SK-N-SH (cell line): ENCODE measurements at regions of chr1 and their contacts with region 1.

Region 1: DNA sequence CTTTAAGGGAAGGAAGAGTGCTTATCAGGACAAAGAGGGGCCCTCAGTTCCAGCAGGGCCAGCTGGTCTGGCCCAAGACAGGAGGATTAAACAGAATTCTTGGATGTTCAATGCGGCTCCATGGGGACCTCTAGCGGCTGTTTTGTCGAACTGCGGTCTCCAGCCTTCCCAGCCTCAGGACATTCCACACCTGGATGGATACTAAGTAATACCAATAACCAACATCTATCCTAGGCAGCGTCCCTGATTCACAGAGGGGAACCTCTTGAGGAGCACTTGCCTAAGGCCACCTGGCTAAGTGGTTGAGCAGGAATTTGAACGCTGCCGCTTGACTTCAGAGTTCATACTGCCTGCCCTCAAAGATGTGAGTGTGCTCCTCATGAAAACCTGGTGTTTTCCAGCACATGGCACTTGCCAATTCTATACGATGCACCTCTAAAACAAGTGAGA is 15.5 kb upstream of the CD247 start:
- DNase-seq: peak; percentile 81
- H3K4me3 ChIP-seq: no peak overlapping the region; a peak in 1 of 4 replicates
- H3K27ac ChIP-seq: no peak overlapping the region
- H3K4me1 ChIP-seq: peaks cover 0 to 3% of the 10 kb centered on the region in 2 experiments; a peak in 1 of 4 replicates
- H3K27me3 ChIP-seq: no peaks in the 10 kb centered on the region; the same call in 1 of the 2 replicates
- CTCF ChIP-seq: peak; percentile 91
- EP300 ChIP-seq: no peak
- RAD21 ChIP-seq: peak; percentile 91

Region 2: GRCh38 chr1:166910396-166910994 is 623.4 kb before region 1 on chr1:
- CTCF ChIA-PET with region 1: interaction called, 11 read pairs
- POLR2A ChIA-PET with region 1: no interaction called
- DNase-seq: peak; percentile 71
- H3K4me3 ChIP-seq: no peak overlapping the region; a peak in 1 of 4 replicates
- H3K27ac ChIP-seq: no peak overlapping the region
- H3K4me1 ChIP-seq: no peaks in the 10 kb centered on the region
- H3K27me3 ChIP-seq: no peaks in the 10 kb centered on the region
- CTCF ChIP-seq: peak; percentile 79
- EP300 ChIP-seq: no peak
- RAD21 ChIP-seq: peak; percentile 91

Region 3: GRCh38 chr1:167066333-167067122 is 467.3 kb before region 1 on chr1:
- CTCF ChIA-PET with region 1: interaction called, 32 read pairs
- POLR2A ChIA-PET with region 1: no interaction called
- DNase-seq: peak; percentile 91
- H3K4me3 ChIP-seq: peak overlapping the region; percentile 30 to 47; a peak in 3 of 4 replicates
- H3K27ac ChIP-seq: no peak overlapping the region
- H3K4me1 ChIP-seq: no peaks in the 10 kb centered on the region; a peak in 2 of 4 replicates
- H3K27me3 ChIP-seq: no peaks in the 10 kb centered on the region; the same call in 1 of the 2 replicates
- CTCF ChIP-seq: peak; percentile 94
- EP300 ChIP-seq: no peak
- RAD21 ChIP-seq: peak; percentile 96

Region 4: GRCh38 chr1:167401260-167401873 is 132.5 kb before region 1 on chr1:
- CTCF ChIA-PET with region 1: interaction called, 35 read pairs
- POLR2A ChIA-PET with region 1: no interaction called
- DNase-seq: peak; percentile 48
- H3K4me3 ChIP-seq: no peak overlapping the region
- H3K27ac ChIP-seq: no peak overlapping the region
- H3K4me1 ChIP-seq: no peaks in the 10 kb centered on the region; a peak in 2 of 4 replicates
- H3K27me3 ChIP-seq: no peaks in the 10 kb centered on the region
- CTCF ChIP-seq: peak; percentile 65
- EP300 ChIP-seq: no peak
- RAD21 ChIP-seq: peak; percentile 79

Region 5: DNA sequence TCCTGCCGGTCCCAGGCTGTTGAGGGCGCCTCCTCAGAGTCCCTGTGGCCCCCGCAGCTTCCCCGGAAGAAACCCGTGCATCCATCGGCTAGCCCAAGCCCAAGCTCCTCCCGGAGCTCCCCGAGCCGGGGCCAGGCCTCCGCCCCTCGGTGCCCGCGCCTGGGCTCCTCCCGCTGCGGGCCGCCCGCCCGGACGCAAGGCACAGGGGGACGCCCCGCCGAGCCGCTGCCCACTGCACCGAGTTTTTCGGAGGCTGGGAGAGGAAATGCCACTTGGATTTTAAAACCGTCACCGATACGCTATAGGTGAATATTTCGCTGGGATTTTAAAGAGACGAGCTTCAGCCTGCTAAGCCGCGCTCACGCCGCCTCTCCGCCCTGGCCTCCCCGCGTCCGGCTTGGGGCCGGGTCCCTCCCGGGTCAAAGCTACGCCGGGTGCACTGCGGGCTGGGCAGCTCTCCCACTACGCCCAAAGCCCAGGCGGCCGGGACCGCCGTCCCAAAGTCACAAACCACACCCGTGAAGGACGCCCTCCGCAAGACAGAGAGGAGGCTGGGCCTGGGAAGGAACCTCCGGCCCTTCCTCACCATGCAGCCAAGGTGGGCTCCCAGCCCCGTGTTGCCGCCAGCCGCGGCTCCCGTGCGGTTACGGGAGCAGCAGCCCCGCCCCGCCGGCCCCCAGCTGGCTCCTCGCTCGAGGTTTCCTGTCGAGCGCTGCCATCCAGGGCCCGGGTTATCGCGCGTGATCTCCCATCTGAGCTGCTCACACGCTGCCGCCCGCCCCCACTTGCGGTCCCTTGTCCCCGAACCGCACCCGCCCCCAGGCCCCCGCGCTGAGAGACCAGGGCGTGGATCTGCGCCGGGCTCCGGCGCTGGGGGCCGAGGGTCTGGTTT is 78.7 kb before region 1 on chr1:
- CTCF ChIA-PET with region 1: interaction called, 32 read pairs
- POLR2A ChIA-PET with region 1: no interaction called
- DNase-seq: peak; percentile 87
- H3K4me3 ChIP-seq: peak overlapping the region; percentile 62 to 87
- H3K27ac ChIP-seq: peak overlapping the region in 1 of 2 experiments; percentile 45; a peak in 1 of 4 replicates
- H3K4me1 ChIP-seq: peaks cover 0 to 8% of the 10 kb centered on the region in 2 experiments; a peak in 1 of 4 replicates
- H3K27me3 ChIP-seq: peaks cover 6% of the 10 kb centered on the region; the same call in 1 of the 2 replicates
- CTCF ChIP-seq: no peak
- EP300 ChIP-seq: no peak
- RAD21 ChIP-seq: no peak

Region 6: GRCh38 chr1:167563579-167564246 is 29.8 kb after region 1 on chr1:
- CTCF ChIA-PET with region 1: interaction called, 14 read pairs
- POLR2A ChIA-PET with region 1: no interaction called
- DNase-seq: no peak
- H3K4me3 ChIP-seq: no peak overlapping the region
- H3K27ac ChIP-seq: no peak overlapping the region
- H3K4me1 ChIP-seq: peaks cover 0 to 4% of the 10 kb centered on the region in 2 experiments; a peak in 1 of 4 replicates
- H3K27me3 ChIP-seq: no peaks in the 10 kb centered on the region
- CTCF ChIP-seq: no peak
- EP300 ChIP-seq: no peak
- RAD21 ChIP-seq: no peak